ENCODE measurements at regions of chr1 and their contacts with region 1.

Region 1: GRCh38 chr1:224113918-224114786 is at the start of gene FBXO28:
- DNase-seq: peak; percentile 97
- total RNA-seq, gene FBXO28: 23.9 TPM

Region 2: GRCh38 chr1:223712194-223712849 is 401.8 kb before region 1 on chr1 and contains the start of gene CAPN2:
- intact Hi-C with region 1: loop called (anchors 10 kb)
- DNase-seq: peak; percentile 91
- total RNA-seq, gene CAPN2: 80.0 TPM

Region 3: GRCh38 chr1:223771814-223772770 is 342.1 kb before region 1 on chr1:
- intact Hi-C with region 1: no loop called
- DNase-seq: no peak

Region 4: DNA sequence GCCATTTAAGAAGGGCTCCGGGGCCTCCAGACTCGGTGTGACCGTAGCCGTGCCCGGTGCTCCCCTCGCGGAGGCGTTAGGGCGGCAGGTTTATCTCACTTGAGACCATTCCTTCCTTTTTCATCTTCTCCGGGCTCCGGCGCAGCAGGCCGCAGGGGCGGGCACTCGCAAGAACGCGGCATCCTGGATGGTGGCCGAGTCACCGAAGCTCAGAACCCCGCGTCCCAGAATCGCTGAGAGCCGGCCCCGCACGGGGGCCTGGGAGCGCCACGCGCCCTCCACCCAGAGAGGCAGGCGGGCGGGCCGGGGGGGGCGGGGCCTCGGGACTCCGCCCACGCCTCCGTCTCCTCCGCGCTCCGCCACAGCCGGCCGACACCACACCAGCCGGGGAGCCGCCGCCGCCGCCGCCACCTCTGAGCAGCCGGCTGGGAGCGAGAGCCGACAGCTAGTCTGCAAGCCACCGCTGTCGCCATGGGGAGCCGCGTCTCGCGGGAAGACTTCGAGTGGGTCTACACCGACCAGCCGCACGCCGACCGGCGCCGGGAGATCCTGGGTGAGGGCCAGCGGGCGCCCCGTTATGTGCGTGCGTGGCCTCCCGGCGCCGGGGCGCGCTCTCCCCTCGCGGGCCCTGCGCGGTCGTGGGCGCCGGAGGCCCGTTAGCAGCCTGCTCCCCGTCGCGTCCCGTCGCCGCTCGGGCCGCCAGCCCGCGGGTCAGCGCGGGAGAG is 68.9 kb after region 1 on chr1 and contains the start of gene DEGS1:
- intact Hi-C with region 1: loop called (anchors 5 kb)
- DNase-seq: peak; percentile 95
- total RNA-seq, gene DEGS1: 36.1 TPM

Region 5: GRCh38 chr1:224329842-224330753 is 215.9 kb after region 1 on chr1 and contains the start of gene NVL:
- intact Hi-C with region 1: loop called (anchors 1 kb)
- DNase-seq: peak; percentile 93
- total RNA-seq, gene NVL: 11.6 TPM